HepG2 (cell line): ENCODE measurements at regions of chr20 and their contacts with region 1.

Region 1: GRCh38 chr20:25390538-25391528 is at the start of gene ABHD12:
- DNase-seq: peak; percentile 97
- ATAC-seq: peak; percentile 94
- H3K4me3 ChIP-seq: peak within 1 kb of the TSS; percentile 89 to 95 (median 92)
- H3K27ac ChIP-seq: peak within 1 kb of the TSS; percentile 79
- H3K4me1 ChIP-seq: peaks cover 33% of the 10 kb centered on the region
- H3K27me3 ChIP-seq: no peaks in the 10 kb centered on the region
- CTCF ChIP-seq: peak; percentile 63
- EP300 ChIP-seq: peak in 1 of 2 experiments; percentile 45; a peak in 1 of 4 replicates
- POLR2A ChIP-seq: peak; percentile 93 to 96
- RAD21 ChIP-seq: peak; percentile 62
- total RNA-seq, gene ABHD12: 43.1 and 72.1 TPM in 2 replicates

Region 2: GRCh38 chr20:25022687-25023086 is 368.1 kb before region 1 on chr20:
- CTCF ChIA-PET with region 1: no interaction called
- POLR2A ChIA-PET with region 1: no interaction called
- in situ Hi-C with region 1: no loop called
- intact Hi-C with region 1: no loop called
- DNase-seq: no peak
- ATAC-seq: peak; percentile 36
- H3K4me3 ChIP-seq: no peak overlapping the region
- H3K27ac ChIP-seq: no peak overlapping the region
- H3K4me1 ChIP-seq: peaks cover 31% of the 10 kb centered on the region
- H3K27me3 ChIP-seq: peaks cover 0 to 2% of the 10 kb centered on the region in 2 experiments; a peak in 1 of 5 replicates
- CTCF ChIP-seq: no peak
- EP300 ChIP-seq: no peak
- POLR2A ChIP-seq: no peak
- RAD21 ChIP-seq: no peak

Region 3: DNA sequence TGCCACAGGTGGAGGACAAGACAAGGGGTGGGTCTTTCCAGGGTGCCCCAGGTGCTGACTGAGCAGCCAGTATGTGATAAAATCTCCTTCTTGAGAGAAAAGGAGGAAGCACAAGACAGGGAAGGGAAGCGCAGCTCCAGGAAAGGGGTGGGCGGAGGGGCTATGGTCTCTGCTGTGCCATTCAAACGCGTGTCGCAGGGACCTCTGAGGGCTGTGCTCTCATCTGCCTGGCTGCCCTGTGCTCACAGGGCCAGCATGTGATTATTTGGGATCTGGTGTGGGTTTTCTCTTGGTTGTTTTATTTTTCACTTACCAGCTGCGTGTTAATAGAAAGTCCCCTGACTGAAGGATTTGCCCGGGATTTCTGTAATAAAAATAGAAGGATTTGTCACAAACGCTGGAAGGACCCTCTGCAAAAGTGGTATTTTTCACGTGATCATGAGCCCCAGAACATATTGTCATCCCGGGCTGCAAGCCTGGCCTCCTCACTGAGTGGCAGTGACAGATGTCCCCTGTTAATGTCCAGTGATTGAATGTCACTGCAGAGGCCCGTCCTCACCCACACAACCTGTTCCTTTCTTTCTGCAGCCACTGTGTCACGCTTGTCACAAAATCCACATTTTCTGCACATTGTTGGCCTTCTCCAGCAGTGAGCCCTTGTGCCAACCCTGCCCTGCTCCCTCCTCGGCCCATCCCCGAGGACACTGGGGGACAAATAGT is 273.9 kb before region 1 on chr20:
- CTCF ChIA-PET with region 1: no interaction called
- POLR2A ChIA-PET with region 1: no interaction called
- in situ Hi-C with region 1: no loop called
- intact Hi-C with region 1: no loop called
- DNase-seq: no peak
- ATAC-seq: no peak
- H3K4me3 ChIP-seq: no peak overlapping the region
- H3K27ac ChIP-seq: no peak overlapping the region
- H3K4me1 ChIP-seq: peaks cover 23% of the 10 kb centered on the region
- H3K27me3 ChIP-seq: peaks cover 4 to 13% of the 10 kb centered on the region in 2 experiments; a peak in 4 of 5 replicates
- CTCF ChIP-seq: no peak
- EP300 ChIP-seq: no peak
- POLR2A ChIP-seq: no peak
- RAD21 ChIP-seq: no peak

Region 4: DNA sequence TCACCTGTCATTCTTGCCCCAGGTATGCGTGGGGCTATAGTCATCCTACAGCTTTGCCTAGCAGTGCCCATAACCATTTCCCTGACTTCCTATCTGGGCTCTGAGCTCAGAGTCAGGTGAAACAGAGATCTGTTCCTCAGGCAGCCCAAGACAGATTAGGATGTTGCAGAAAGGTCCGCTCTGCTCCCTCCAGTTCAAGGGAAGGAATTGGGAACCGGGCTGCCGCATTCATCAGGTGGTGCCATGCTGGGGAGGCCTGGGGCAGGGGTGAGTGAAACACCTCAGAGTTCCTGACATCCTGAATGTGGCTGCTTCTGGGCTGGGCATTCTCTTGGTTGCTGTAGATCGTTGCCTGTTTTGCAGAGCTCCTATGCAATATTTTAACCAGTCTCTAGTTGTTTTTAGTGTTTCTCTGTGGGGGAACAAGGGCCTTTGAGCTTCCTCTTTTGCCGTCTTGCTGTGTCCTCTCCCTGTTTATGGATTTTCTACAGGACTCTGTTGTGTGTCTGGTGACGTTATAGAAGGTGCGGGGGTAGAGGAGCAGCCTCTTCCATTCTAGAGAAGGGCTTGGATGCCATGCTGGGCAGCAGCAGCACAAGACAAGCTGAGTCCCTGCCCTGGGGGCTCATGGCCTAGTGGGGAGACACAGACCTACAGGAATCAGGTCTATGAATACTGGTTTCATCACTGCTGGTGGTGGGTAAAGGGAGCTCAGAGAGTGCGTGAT is 186.1 kb before region 1 on chr20:
- CTCF ChIA-PET with region 1: no interaction called
- POLR2A ChIA-PET with region 1: no interaction called
- in situ Hi-C with region 1: no loop called
- intact Hi-C with region 1: no loop called
- DNase-seq: no peak
- ATAC-seq: peak; percentile 11; the same call in 1 of the 3 replicates
- H3K4me3 ChIP-seq: no peak overlapping the region
- H3K27ac ChIP-seq: no peak overlapping the region
- H3K4me1 ChIP-seq: peaks cover 34% of the 10 kb centered on the region
- H3K27me3 ChIP-seq: no peaks in the 10 kb centered on the region
- CTCF ChIP-seq: no peak
- EP300 ChIP-seq: no peak
- POLR2A ChIP-seq: no peak
- RAD21 ChIP-seq: no peak

Region 5: DNA sequence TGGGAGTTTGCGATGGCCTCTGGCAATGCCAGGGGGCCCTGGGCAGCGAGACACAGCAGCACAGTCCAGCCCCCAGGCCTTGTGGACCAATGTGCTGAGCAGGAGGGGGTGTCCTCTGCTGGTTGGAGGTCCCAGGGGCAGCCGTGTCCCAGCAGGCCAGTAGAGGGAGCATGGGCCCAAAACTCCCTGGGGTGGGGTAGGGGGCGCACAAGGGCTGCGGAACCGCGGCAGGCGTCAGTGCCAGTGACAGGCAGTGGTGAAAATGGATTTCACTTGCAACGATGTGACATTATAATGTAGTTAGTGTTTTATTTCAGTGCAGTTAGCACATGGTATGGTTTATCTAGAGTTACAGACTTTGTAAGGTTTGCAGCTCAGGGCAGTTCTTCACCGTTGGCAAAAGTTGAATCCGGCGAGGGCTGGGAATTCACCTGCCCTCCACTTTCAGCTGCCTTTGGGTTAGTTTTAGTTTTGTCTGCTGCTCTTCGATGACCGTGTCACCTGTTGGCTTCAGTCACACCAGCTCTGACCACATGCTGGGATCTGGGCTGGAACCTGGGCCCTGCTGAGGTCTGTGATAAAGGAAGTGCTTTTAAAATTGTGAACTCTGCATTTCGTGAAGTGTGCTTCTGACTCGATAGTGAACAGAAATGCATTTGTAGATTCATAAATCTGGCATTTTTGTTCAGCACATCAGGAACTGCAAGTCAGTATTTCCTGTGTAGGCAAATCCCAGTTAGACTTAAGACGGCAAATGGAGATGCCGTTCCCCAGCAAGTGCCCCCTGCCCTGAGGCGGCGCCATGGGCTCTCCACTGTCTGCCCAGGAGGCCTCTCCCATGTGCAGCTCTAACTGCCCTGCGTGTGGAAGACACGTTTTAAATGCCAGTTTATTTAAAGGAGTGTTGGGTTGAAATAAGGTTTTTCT is 96.1 kb before region 1 on chr20:
- CTCF ChIA-PET with region 1: interaction called, 4 read pairs
- POLR2A ChIA-PET with region 1: no interaction called
- in situ Hi-C with region 1: loop called (anchors 5 kb)
- intact Hi-C with region 1: loop called (anchors 10 kb)
- DNase-seq: peak; percentile 82
- ATAC-seq: peak; percentile 90
- H3K4me3 ChIP-seq: no peak overlapping the region
- H3K27ac ChIP-seq: no peak overlapping the region
- H3K4me1 ChIP-seq: 0 out of 2 replicates have a peak, but pooled peaks cover 5% of the 10 kb centered on the region
- H3K27me3 ChIP-seq: no peaks in the 10 kb centered on the region
- CTCF ChIP-seq: peak; percentile 100
- EP300 ChIP-seq: no peak
- POLR2A ChIP-seq: no peak; a peak in 1 of 4 replicates
- RAD21 ChIP-seq: peak; percentile 98

Region 6: GRCh38 chr20:25336561-25337422 is 54.0 kb before region 1 on chr20:
- CTCF ChIA-PET with region 1: no interaction called
- POLR2A ChIA-PET with region 1: interaction called, 38 read pairs
- in situ Hi-C with region 1: no loop called
- intact Hi-C with region 1: loop called (anchors 1 kb)
- DNase-seq: peak; percentile 82
- ATAC-seq: peak; percentile 81
- H3K4me3 ChIP-seq: no peak overlapping the region
- H3K27ac ChIP-seq: no peak overlapping the region
- H3K4me1 ChIP-seq: peaks cover 45% of the 10 kb centered on the region
- H3K27me3 ChIP-seq: no peaks in the 10 kb centered on the region
- CTCF ChIP-seq: peak; percentile 96
- EP300 ChIP-seq: no peak
- POLR2A ChIP-seq: no peak
- RAD21 ChIP-seq: peak; percentile 91

Region 7: DNA sequence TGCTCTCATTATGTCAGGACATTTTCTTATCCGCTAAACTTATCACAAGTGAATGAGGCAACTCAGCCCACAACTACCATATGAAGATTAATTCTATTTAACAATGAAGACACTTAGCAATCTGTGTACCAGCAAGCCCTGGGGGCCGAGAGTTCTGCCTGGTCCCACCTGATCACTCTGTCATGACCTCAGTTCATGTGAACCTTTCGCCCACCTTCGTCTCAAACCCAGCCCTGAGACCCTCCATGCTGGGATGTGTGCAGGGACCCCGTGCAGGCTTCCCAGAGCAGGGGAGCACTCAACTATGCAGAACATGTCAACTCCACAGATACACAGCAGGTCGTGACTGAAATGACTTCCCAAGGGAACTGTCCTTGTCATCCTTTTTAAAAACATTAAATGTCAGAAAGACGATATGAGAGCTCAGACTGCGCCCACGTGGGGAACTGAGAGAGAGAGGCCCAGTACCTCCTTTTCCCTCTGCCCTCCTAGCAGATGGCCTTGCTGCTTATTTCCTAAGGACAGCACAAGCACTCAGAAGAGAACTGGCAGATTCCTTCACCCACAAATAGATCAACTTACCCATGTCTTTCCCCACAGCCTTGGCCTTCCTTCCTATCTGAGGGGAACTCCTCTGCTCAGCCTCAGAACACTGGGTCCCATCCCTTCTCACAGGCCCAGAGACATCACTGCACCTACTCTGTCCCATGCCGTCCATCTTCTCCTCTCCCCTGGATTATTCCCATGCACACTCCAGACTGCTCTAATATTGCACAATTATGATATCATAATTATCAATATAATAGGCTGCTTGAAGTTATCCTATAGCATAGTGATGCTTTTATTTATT is 11.7 kb before region 1 on chr20:
- CTCF ChIA-PET with region 1: no interaction called
- POLR2A ChIA-PET with region 1: interaction called, 18 read pairs
- in situ Hi-C with region 1: no loop called
- intact Hi-C with region 1: loop called (anchors 1 kb)
- DNase-seq: no peak
- ATAC-seq: peak; percentile 24
- H3K4me3 ChIP-seq: peak overlapping the region in 1 of 3 experiments; percentile 15; a peak in 1 of 6 replicates
- H3K27ac ChIP-seq: peak overlapping the region; percentile 10
- H3K4me1 ChIP-seq: peaks cover 66% of the 10 kb centered on the region
- H3K27me3 ChIP-seq: no peaks in the 10 kb centered on the region; a peak in 1 of 5 replicates
- CTCF ChIP-seq: no peak
- EP300 ChIP-seq: no peak
- POLR2A ChIP-seq: no peak
- RAD21 ChIP-seq: no peak

Region 8: GRCh38 chr20:25407311-25408169 is 16.7 kb after region 1 on chr20 and contains the start of gene GINS1:
- CTCF ChIA-PET with region 1: no interaction called
- POLR2A ChIA-PET with region 1: interaction called, 8 read pairs
- in situ Hi-C with region 1: no loop called
- intact Hi-C with region 1: loop called (anchors 1 kb)
- DNase-seq: peak; percentile 95
- ATAC-seq: peak; percentile 93
- H3K4me3 ChIP-seq: peak within 1 kb of the TSS; percentile 78 to 89 (median 88)
- H3K27ac ChIP-seq: peak within 1 kb of the TSS; percentile 86
- H3K4me1 ChIP-seq: peaks cover 24% of the 10 kb centered on the region
- H3K27me3 ChIP-seq: no peaks in the 10 kb centered on the region; a peak in 1 of 5 replicates
- CTCF ChIP-seq: peak; percentile 42; the same call in 1 of the 2 replicates
- EP300 ChIP-seq: peak; percentile 37 to 65
- POLR2A ChIP-seq: peak; percentile 94 to 99
- RAD21 ChIP-seq: peak; percentile 48; the same call in 1 of the 2 replicates
- total RNA-seq, gene GINS1: 59.9 and 74.6 TPM in 2 replicates

Region 9: GRCh38 chr20:25437153-25437581 is 46.3 kb after region 1 on chr20:
- CTCF ChIA-PET with region 1: no interaction called
- POLR2A ChIA-PET with region 1: no interaction called
- in situ Hi-C with region 1: no loop called
- intact Hi-C with region 1: no loop called
- DNase-seq: no peak
- ATAC-seq: no peak; the same call in 2 of the 3 replicates
- H3K4me3 ChIP-seq: no peak overlapping the region
- H3K27ac ChIP-seq: no peak overlapping the region
- H3K4me1 ChIP-seq: no peaks in the 10 kb centered on the region
- H3K27me3 ChIP-seq: no peaks in the 10 kb centered on the region
- CTCF ChIP-seq: no peak
- EP300 ChIP-seq: no peak
- POLR2A ChIP-seq: no peak
- RAD21 ChIP-seq: no peak